Activated CD4-positive, alpha-beta memory T cell treated with anti-CD3 and anti-CD28 coated beads for 36 hours (primary cell): ENCODE measurements at regions of chr11 and their contacts with region 1.

Region 1: DNA sequence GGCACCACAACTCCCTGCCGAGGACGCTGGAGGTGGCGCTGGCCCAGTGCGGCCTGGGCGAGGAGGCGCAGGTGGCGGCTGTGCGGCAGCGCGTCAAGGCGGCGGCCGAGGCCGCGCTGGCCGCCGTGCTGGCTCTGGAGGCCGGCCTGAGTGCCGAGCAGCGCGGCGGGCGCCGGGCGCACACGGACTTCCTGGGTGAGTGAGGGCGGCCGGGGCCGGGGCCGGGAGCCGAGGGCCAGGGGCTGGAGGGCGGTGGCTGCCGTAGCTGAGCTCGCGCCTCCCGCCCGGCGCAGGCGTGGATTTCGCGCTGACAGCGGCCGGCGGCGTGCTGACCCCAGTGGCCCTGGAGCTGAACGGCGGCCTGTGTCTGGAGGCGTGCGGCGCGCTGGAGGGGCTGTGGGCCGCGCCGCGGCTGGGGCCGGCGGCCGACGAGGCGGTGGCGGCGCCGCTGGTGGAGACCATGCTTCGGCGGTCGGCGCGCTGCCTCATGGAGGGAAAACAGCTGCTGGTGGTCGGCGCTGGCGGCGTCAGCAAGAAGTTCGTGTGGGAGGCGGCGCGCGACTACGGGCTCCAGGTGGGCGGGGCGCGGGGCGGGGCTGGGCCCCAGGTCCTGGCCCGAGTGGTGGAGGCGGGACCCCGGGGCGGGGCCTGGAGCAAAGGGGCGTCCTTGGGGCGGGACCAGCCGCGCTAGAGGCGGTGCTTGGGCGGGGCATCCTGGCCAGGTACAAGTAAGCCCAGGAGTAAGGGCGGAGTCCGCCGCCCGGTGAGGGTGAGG is 5.4 kb downstream of the CARNS1 start:
- DNase-seq: peak; percentile 98
- H3K4me3 Mint-ChIP-seq: peak overlapping the region; percentile 74
- H3K27ac Mint-ChIP-seq: peak overlapping the region; percentile 69
- H3K4me1 Mint-ChIP-seq: peaks cover 41% of the 10 kb centered on the region
- H3K27me3 Mint-ChIP-seq: no peaks in the 10 kb centered on the region

Region 2: GRCh38 chr11:67312187-67313103 is 108.4 kb before region 1 on chr11:
- CTCF ChIA-PET with region 1: no interaction called
- POLR2A ChIA-PET with region 1: no interaction called
- intact Hi-C with region 1: no loop called
- DNase-seq: peak; percentile 67
- H3K4me3 Mint-ChIP-seq: no peak overlapping the region
- H3K27ac Mint-ChIP-seq: peak overlapping the region; percentile 83
- H3K4me1 Mint-ChIP-seq: peaks cover 28% of the 10 kb centered on the region
- H3K27me3 Mint-ChIP-seq: no peaks in the 10 kb centered on the region

Region 3: DNA sequence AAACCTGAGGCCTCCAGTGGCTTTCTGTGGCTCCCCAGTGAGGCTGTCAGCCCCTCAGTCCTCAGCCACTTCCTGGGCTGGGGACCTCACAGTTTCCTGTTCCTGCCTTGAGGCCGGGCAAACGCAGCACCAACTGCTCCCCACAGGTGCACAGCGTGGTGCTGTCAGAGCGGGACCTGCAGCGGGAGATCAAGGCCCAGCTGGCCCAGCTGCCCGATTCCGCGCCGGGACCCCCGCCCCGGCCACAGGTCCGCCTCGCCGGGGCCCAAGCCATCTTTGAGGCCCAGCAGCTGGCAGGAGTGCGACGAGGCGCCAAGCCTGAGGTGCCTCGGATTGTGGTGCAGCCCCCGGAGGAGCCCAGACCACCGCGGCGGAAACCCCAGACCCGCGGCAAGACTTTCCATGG is 11.6 kb before region 1 on chr11:
- CTCF ChIA-PET with region 1: interaction called, 7 read pairs
- POLR2A ChIA-PET with region 1: interaction called, 21 read pairs
- intact Hi-C with region 1: no loop called
- DNase-seq: peak; percentile 86
- H3K4me3 Mint-ChIP-seq: peak overlapping the region; percentile 87
- H3K27ac Mint-ChIP-seq: peak overlapping the region; percentile 93
- H3K4me1 Mint-ChIP-seq: peaks cover 81% of the 10 kb centered on the region
- H3K27me3 Mint-ChIP-seq: no peaks in the 10 kb centered on the region